ENCODE measurements at regions of chr7 and their contacts with region 1.

Region 1: DNA sequence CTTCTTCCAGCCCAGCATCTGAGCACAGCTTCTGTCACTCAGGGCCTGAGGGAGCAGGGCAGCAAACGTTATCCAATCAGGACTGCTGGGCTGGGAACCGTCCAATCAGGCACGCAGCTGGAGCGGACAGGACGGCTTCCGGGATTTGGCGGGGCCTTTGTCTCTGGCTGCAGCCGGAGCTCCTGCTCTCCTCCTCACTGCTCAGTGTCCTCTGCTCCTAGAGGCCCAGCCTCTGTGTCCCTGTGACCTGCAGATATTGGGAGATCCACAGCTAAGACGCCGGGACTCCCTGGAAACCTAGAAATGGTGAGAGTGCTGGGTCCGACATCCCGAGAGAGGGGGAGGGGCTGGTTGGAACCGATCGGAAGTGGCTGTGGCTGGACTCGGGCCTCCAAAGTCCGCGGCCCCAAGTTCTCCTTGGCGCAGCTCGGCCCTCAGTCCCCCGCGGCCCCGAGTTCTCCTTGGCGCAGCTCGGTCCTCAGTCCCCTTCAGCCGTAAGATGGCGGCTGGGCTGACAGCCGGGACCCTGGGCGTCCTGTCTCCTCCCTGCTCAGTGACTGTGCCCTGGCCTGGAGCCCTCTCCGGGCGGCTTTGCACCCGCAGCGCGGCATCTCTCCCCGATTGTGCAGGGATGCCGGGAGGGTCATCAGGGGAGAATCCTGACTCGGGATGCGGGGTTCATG is at the start of gene ZNF107:
- DNase-seq: peak; percentile 81
- ATAC-seq: peak; percentile 100
- H3K4me3 Mint-ChIP-seq: peak within 1 kb of the TSS; percentile 96
- H3K27ac Mint-ChIP-seq: peak within 1 kb of the TSS; percentile 98
- H3K4me1 Mint-ChIP-seq: peaks cover 24% of the 10 kb centered on the region
- H3K27me3 Mint-ChIP-seq: no peaks in the 10 kb centered on the region
- total RNA-seq, gene ZNF107: 28.9 to 29.0 TPM

Region 2: DNA sequence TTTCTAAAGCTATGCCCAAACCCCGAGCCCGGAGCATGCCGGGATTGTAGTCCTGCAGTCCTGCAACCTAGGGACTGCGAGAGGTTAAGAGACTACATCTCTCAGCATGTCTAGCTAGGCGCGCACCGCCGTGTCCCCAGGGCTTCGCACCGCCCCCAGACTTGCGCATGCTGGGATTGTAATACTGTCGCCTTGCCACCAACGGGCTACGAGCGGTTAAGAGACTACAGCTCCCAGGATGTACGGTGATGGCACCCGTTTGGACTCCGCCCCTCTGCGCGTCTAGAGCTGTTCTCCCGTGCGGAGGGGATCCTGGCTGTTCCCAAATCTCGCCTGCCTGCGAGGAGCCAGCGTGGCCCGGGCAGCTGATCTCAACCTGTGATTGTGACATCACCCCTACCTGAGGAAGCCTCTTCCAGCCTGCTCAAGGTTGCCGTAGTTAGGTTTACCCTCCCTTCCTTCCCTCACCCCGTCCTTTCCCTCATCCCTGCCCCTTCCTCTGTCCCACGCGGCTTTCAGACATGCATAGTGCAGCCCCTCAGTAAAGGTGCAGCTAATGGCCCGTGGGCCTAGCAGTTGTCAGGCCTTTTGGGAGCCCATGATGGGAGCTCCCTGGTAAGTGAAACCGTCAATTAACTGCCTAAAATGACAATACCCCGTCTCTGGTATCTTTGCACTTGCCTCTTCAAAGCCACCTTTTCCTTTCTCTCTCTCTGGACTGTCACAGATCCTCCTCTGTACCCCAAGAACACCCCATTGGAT is 358.7 kb before region 1 on chr7:
- POLR2A ChIA-PET with region 1: interaction called, 21 read pairs
- DNase-seq: peak; percentile 87
- ATAC-seq: peak; percentile 100
- H3K4me3 Mint-ChIP-seq: peak overlapping the region; percentile 98
- H3K27ac Mint-ChIP-seq: peak overlapping the region; percentile 98
- H3K4me1 Mint-ChIP-seq: peaks cover 8% of the 10 kb centered on the region
- H3K27me3 Mint-ChIP-seq: no peaks in the 10 kb centered on the region

Region 3: DNA sequence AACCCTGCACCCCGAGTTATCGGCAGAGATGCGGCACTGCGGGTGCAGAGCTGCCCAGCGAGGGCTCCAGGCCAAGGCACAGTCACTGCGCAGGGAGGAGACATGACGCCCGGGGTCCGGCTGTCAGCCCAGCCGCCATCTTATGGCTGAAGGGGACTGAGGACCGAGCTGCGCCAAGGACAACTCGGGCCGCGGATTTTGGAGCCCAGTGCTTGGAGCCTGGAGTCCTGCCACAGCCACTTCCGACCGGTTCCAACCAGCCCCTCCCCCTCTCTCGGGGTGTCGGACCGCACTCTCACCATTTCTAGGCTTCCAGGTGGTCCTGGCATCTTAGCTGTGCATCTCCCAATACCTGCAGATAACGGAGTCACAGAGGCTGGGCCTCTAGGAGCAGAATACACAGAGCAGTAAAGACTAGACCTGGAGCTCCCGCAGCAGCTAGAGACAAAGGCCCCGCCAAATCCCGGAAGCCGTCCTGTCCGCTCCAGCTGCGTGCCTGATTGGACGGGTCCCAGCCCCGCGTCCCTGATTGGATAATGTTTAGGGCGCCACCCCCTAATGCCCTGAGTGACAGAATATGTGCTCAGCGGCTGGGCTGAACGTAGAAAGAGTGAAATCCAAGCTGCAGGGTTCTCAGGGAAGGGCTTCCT is 103.4 kb before region 1 on chr7 and contains the start of gene ZNF680:
- POLR2A ChIA-PET with region 1: interaction called, 28 read pairs
- DNase-seq: peak; percentile 84
- ATAC-seq: peak; percentile 99
- H3K4me3 Mint-ChIP-seq: peak within 1 kb of the TSS; percentile 99
- H3K27ac Mint-ChIP-seq: peak within 1 kb of the TSS; percentile 100
- H3K4me1 Mint-ChIP-seq: peaks cover 5% of the 10 kb centered on the region
- H3K27me3 Mint-ChIP-seq: no peaks in the 10 kb centered on the region
- total RNA-seq, gene ZNF680: 21.8 to 23.7 TPM

Region 4: DNA sequence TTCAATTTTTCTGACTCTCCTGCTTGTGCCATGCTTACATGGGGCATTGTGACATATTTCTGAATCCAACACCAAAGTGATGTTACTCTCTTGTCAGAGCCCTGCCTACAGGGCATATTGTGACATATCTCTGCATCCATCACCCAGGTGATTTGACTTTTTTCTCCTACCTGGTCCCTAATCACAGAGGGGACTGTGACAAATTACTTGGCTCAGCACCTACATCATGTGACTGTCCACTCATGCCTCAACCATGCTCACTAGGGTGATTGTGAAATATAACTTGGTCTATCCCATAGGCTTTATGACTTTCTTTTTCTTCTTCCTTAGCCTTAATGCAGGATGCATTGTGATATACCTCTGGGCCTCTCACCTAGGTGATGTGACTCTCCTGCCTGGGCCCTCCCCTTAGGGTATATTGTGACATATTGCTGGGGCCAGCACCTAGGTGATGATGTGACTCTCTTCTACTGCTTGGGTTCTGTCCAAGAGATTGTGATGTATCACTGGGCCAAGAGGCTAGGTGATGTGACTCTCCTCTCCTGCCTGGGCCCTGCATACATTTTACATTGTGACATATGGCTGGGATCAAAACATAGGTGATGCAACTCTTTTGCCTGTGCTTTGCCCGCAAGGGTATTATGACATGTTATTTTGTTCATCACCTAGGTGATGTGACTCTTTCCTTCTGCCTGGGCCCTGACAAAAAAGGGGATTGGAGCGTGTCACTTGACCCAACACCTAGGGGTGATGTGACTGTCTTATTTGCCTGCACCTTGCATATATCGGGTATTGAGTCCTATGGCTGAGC is 14.9 kb before region 1 on chr7:
- POLR2A ChIA-PET with region 1: no interaction called
- DNase-seq: no peak
- ATAC-seq: no peak
- H3K4me3 Mint-ChIP-seq: no peak overlapping the region
- H3K27ac Mint-ChIP-seq: no peak overlapping the region
- H3K4me1 Mint-ChIP-seq: no peaks in the 10 kb centered on the region
- H3K27me3 Mint-ChIP-seq: no peaks in the 10 kb centered on the region

Region 5: DNA sequence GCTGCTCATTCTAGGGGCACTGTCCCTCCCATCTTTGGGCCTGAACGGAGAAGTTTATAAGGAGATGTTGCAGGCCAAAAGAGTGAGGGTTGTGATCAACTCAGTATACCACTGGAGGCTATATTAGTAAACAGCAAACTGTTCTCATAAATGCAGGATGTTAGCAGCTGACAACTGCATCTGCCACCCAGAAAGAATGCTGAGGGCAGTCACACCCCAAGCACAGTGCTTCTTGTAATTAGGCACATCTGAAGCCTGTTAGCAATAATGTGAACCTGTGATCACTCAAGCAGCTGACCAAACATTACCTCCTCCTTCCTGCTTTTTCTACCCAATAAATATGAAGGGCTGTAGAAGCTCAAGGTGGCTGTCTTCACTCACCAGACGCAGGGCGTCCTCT is 89.7 kb after region 1 on chr7:
- POLR2A ChIA-PET with region 1: no interaction called
- DNase-seq: no peak
- ATAC-seq: no peak
- H3K4me3 Mint-ChIP-seq: no peak overlapping the region
- H3K27ac Mint-ChIP-seq: no peak overlapping the region
- H3K4me1 Mint-ChIP-seq: no peaks in the 10 kb centered on the region
- H3K27me3 Mint-ChIP-seq: no peaks in the 10 kb centered on the region

Region 6: GRCh38 chr7:64794171-64794844 is 128.2 kb after region 1 on chr7 and contains the start of gene ZNF138:
- POLR2A ChIA-PET with region 1: interaction called, 25 read pairs
- DNase-seq: peak; percentile 88
- ATAC-seq: peak; percentile 99
- H3K4me3 Mint-ChIP-seq: peak within 1 kb of the TSS; percentile 99
- H3K27ac Mint-ChIP-seq: peak within 1 kb of the TSS; percentile 99
- H3K4me1 Mint-ChIP-seq: peaks cover 12% of the 10 kb centered on the region
- H3K27me3 Mint-ChIP-seq: no peaks in the 10 kb centered on the region
- total RNA-seq, gene ZNF138: 12.5 to 14.0 TPM

Region 7: DNA sequence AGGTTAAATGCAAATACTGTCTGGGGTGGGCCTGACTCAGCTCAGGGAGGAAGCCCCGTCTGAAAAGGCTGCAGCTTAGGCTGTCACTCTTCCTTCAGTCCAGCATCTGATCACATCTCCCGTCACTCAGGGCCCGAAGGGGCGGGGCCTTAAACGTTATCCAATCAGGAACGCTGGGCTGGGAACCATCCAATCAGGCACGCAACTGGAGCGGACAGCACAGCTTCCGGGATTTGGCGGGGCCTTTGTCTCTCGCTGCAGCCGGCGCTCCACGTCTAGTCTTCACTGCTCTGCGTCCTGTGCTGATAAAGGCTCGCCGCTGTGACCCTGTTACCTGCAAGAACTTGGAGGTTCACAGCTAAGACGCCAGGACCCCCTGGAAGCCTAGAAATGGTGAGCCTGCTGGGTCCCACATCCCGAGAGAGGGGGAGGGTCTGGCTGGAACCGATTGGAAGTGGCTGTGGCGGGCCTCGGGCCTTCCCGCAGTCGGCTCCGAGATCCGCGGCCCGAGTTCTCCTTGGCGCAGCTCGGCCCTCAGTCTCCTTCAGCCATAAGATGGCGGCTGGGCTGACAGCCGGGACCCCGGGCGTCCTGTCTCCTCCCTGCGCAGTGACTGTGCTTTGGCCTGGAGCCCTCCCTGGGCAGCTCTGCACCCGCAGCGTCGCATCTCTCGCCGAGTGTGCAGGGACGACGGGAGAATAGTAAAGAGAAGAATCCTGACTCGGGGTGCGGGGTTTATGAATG is 707.7 kb after region 1 on chr7 and contains the start of gene ZNF92:
- POLR2A ChIA-PET with region 1: interaction called, 11 read pairs
- DNase-seq: peak; percentile 93
- ATAC-seq: peak; percentile 98
- H3K4me3 Mint-ChIP-seq: peak within 1 kb of the TSS; percentile 98
- H3K27ac Mint-ChIP-seq: peak within 1 kb of the TSS; percentile 95
- H3K4me1 Mint-ChIP-seq: peaks cover 16% of the 10 kb centered on the region
- H3K27me3 Mint-ChIP-seq: no peaks in the 10 kb centered on the region
- total RNA-seq, gene ZNF92: 25.5 to 26.0 TPM

Measured in activated naive CD8-positive, alpha-beta T cell treated with anti-CD3 and anti-CD28 coated beads, Interleukin-2, amount 10 ng/mL, durations not matched to agents 7 days and 5 days (primary cell).